Heart right ventricle (tissue), 16 donors: ENCODE measurements at regions of chr3 and their contacts with region 1.

Region 1: DNA sequence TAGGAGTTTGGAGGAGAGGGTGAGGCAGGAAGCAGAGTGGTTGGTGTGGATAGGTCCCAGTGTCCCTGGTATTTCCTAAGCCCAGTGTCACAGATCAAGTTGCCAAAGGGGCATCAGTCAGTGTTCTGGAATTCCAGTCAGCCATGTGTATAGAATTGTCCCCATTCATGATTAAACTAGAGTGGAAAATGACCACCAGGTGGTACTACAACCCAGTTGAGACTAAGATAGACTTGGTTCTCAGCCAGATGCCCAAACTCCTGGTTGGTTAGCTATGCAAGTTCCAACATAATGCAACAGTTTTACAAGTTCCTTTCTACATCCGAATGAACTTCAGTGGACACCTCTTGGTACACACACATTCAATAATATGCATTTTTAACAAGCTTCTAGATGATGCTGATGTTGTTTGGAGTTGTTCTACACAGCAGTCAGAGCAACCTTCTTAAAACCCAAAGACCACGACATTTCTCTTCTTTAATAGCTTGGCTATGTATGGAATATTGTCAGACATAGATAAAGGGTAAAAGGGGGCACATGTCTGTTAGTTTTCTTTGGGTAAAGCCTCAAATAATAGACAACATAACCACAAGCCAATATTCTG is 8.4 kb upstream of the ATR start:
- DNase-seq: peak in 1 of 2 donors; percentile 40
- ATAC-seq: peak in 7 of 8 donors; percentile 64 to 82 (median 68)
- H3K4me3 ChIP-seq: no peak overlapping the region
- H3K27ac ChIP-seq: no peak overlapping the region
- H3K4me1 ChIP-seq: peaks cover 0 to 6% (median 0%) of the 10 kb centered on the region in 9 donors
- H3K27me3 ChIP-seq: peaks cover 0 to 4% (median 0%) of the 10 kb centered on the region in 7 donors
- CTCF ChIP-seq: peak; percentile 39 to 73 (median 61)

Region 2: DNA sequence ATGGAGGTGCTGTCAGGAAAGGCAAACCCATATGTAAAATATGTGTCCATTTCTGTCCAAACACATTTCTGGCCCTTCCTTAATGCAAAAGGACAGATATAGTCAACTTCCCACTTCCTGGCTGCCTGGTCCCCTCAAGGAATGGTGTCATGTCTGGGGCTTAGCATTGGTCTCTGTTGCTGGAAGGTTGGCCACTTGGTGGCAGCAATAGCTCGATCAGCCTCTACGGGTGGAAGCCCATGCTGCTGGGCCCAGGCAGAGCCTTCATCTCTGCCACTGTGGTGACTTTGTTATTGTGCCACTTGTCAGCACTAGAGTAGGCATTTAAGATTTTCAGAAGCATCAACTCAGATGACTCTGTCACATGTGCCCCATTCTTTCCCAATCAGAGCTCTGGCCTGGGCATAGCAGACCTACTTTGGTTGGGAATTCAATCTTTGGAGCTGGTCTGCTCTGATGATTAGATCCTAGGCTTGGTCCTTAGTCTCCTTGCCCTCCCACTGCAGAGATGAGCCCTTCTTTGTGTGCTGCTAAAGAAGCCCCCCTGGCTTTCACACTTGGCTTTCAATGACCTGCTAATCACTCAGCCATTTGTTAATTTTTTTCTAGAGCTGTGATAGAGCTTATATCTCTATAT is 1586.8 kb before region 1 on chr3:
- intact Hi-C with region 1: no loop called
- DNase-seq: peak; percentile 62 to 63
- ATAC-seq: peak; percentile 91 to 97 (median 94)
- H3K4me3 ChIP-seq: no peak overlapping the region
- H3K27ac ChIP-seq: no peak overlapping the region
- H3K4me1 ChIP-seq: no peaks in the 10 kb centered on the region
- H3K27me3 ChIP-seq: no peaks in the 10 kb centered on the region
- CTCF ChIP-seq: peak; percentile 47 to 85 (median 77)

Region 3: DNA sequence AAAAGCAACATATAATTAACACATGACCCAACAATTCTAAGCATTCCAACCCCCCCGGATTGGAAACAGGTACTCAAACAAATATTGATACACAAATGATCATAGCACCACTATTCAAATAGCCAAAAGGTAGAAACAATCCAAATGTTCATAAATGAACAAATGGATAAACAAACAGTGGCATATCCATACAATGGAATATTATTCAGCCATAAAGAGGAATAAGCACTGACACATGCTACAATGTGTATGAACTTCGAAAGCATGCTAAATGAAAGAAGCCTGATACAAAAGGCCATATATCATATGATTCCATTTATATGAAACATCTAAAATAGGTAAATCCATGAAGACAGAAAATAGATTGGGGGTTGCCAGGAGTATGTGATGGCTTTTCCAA is 201.8 kb before region 1 on chr3:
- intact Hi-C with region 1: no loop called
- DNase-seq: no peak
- ATAC-seq: no peak
- H3K4me3 ChIP-seq: no peak overlapping the region
- H3K27ac ChIP-seq: no peak overlapping the region
- H3K4me1 ChIP-seq: no peaks in the 10 kb centered on the region
- H3K27me3 ChIP-seq: no peaks in the 10 kb centered on the region
- CTCF ChIP-seq: no peak

Region 4: GRCh38 chr3:142501004-142501926 is 85.6 kb before region 1 on chr3:
- intact Hi-C with region 1: no loop called
- DNase-seq: no peak
- ATAC-seq: no peak
- H3K4me3 ChIP-seq: no peak overlapping the region
- H3K27ac ChIP-seq: no peak overlapping the region
- H3K4me1 ChIP-seq: no peaks in the 10 kb centered on the region
- H3K27me3 ChIP-seq: no peaks in the 10 kb centered on the region
- CTCF ChIP-seq: no peak

Region 5: DNA sequence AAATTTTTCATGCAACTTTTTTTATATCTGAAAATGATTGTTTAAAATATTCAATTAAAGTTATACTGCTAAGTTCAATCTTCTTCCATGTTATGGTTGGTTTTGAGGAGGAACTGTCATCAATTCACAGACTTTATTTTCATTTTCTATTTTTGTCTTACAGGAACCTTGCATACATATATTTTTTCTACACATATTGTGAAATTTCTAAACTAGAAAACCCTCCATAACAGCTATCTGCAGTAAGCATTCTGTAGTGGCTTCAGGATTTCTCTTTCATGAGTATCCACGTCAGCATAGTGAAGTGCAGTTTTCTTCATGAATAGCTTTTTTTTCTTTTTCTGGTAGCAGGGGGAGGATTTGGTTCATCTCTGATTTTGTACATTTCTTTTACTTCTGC is 56.6 kb before region 1 on chr3:
- intact Hi-C with region 1: no loop called
- DNase-seq: no peak
- ATAC-seq: no peak
- H3K4me3 ChIP-seq: no peak overlapping the region
- H3K27ac ChIP-seq: no peak overlapping the region
- H3K4me1 ChIP-seq: peaks cover 0 to 10% (median 0%) of the 10 kb centered on the region in 9 donors
- H3K27me3 ChIP-seq: no peaks in the 10 kb centered on the region
- CTCF ChIP-seq: no peak

Region 6: DNA sequence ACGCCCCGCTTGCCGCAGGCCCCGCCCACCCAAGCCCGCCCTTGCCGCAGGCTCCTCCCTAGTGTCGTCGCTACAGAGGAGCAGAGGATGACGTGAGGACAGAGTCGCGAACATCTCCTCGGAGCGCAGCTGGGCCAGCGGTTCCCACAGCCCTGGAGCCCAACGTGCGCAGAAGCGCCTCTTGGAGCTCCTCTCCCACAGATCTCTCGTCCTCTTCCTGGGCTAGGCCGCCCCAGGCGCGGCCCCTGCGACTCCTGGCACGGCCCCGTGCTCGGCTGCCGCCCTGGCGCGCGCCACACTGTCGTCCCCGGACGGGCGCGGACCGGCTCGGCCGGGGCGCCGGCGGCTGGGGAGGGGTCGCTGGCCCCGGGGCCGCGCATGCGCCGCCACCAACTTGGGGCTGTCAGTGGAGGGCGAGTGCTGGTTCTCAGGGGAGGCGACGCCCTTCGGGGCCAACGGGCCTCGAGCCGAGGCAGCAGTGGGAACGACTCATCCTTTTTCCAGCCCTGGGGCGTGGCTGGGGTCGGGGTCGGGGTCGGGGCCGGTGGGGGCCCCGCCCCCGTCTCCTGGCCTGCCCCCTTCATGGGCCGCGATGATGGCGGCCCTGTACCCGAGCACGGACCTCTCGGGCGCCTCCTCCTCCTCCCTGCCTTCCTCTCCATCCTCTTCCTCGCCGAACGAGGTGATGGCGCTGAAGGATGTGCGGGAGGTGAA is 137.2 kb after region 1 on chr3 and contains the start of gene TRPC1:
- intact Hi-C with region 1: loop called in 5 of 10 experiments (anchors 10 kb)
- DNase-seq: peak; percentile 77 to 78
- ATAC-seq: peak; percentile 89 to 95 (median 94)
- H3K4me3 ChIP-seq: peak within 1 kb of the TSS; percentile 72 to 94 (median 82)
- H3K27ac ChIP-seq: peak within 1 kb of the TSS; percentile 82 to 99 (median 91)
- H3K4me1 ChIP-seq: peaks cover 0 to 29% (median 15%) of the 10 kb centered on the region in 9 donors
- H3K27me3 ChIP-seq: peaks cover 0 to 24% (median 0%) of the 10 kb centered on the region in 7 donors
- CTCF ChIP-seq: no peak
- total RNA-seq, gene TRPC1: 6.3 to 17.6 (median 11.8) TPM

Region 7: DNA sequence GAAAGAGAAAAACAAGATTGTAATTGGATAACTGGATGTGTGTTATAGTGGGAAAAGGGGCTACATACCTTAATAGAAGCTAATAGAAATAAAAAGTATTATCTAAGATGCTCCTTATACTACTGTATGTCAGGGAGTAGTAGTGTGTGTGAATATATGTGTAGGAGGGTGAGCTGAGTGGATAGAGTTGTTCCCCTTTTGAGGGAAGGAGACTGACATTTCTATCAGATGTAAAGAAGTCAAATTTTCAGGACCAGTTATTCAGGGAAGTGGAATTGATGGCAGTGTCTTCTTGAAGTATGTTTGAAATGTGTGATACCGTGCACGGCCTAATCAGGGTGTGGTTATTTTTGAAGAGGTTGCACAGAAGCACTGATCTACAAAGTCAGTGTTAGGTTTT is 252.9 kb after region 1 on chr3:
- intact Hi-C with region 1: loop called in 1 of 10 experiments (anchors 10 kb)
- DNase-seq: no peak
- ATAC-seq: no peak
- H3K4me3 ChIP-seq: no peak overlapping the region
- H3K27ac ChIP-seq: no peak overlapping the region
- H3K4me1 ChIP-seq: no peaks in the 10 kb centered on the region
- H3K27me3 ChIP-seq: no peaks in the 10 kb centered on the region
- CTCF ChIP-seq: no peak

Region 8: DNA sequence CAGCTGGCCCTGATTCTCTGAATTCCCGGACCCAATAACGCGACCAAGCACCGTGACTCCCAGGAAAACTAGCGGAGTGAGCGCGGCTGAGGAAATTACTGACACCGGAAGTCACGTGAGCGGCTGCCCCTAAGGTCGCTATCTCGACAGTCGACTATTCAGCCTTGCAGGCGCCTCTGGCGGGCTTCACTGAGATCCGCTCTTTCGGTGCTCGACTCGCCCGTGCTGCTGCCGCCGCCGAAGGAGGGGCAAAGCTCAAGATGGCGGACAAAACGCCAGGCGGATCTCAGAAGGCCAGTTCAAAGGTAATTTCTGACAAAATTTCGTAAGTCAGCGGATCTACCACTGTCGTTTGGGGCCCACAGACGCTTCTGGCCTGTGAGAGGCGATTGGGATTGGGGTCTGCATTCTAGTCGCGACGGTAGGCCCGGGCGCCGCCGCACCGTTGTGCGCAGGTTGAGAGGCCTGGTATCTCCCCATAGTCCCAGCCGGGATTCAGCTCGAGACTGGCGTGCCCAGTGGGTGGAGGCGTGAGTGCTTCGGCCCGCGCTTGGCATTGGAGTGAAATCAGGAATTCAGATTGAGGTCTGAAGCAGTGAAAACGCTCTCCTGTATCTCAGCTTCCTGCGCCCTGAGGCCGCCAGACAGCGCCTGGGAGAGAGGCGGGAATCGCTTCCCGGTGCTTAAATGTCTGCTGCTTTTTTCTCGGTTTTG is 414.6 kb after region 1 on chr3 and contains the start of gene U2SURP:
- intact Hi-C with region 1: loop called in 3 of 10 experiments (anchors 5 to 10 kb)
- DNase-seq: peak; percentile 93 to 98
- ATAC-seq: peak; percentile 94 to 99 (median 96)
- H3K4me3 ChIP-seq: peak within 1 kb of the TSS; percentile 62 to 91 (median 77)
- H3K27ac ChIP-seq: peak within 1 kb of the TSS; percentile 52 to 94 (median 89)
- H3K4me1 ChIP-seq: peaks cover 0 to 66% (median 56%) of the 10 kb centered on the region in 9 donors
- H3K27me3 ChIP-seq: no peaks in the 10 kb centered on the region
- CTCF ChIP-seq: peak in 4 of 9 donors; percentile 5 to 16 (median 10)
- total RNA-seq, gene U2SURP: 35.8 to 49.3 (median 40.2) TPM